GM12878 (cell line): ENCODE measurements at regions of chr3 and their contacts with region 1.

Region 1: DNA sequence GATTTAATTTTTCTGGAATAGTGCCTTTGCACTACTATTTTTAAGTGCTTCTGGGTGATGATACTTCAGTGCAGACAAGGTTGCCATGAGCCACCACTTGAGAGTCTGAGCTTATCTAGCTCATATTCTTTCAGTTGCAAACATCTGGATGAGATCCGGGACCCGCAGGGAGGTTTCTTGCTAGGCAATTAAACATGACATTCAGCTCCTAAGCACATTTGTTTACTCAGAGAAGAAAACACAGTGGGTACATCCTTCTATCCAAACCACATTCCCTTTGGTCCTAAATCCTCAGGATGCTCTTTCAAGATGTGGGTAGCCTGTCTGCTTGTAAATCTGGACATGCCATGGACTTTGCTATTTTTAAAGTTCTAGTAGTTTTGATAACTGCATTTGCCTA is 12.0 kb downstream of the PLSCR1 start:
- DNase-seq: no peak
- ATAC-seq: no peak
- H3K4me3 ChIP-seq: no peak overlapping the region
- H3K27ac ChIP-seq: no peak overlapping the region
- H3K4me1 ChIP-seq: no peaks in the 10 kb centered on the region
- H3K27me3 ChIP-seq: no peaks in the 10 kb centered on the region
- CTCF ChIP-seq: no peak
- EP300 ChIP-seq: no peak
- POLR2A ChIP-seq: no peak
- RAD21 ChIP-seq: no peak

Region 2: GRCh38 chr3:144643771-144644198 is 1888.6 kb before region 1 on chr3:
- CTCF ChIA-PET with region 1: no interaction called
- POLR2A ChIA-PET with region 1: no interaction called
- RAD21 ChIA-PET with region 1: no interaction called
- SMC1A ChIA-PET with region 1: no interaction called
- in situ Hi-C with region 1: no loop called
- intact Hi-C with region 1: no loop called
- DNase-seq: no peak
- ATAC-seq: no peak
- H3K4me3 ChIP-seq: no peak overlapping the region
- H3K27ac ChIP-seq: no peak overlapping the region
- H3K4me1 ChIP-seq: no peaks in the 10 kb centered on the region
- H3K27me3 ChIP-seq: no peaks in the 10 kb centered on the region
- CTCF ChIP-seq: no peak
- EP300 ChIP-seq: no peak
- POLR2A ChIP-seq: no peak
- RAD21 ChIP-seq: no peak

Region 3: DNA sequence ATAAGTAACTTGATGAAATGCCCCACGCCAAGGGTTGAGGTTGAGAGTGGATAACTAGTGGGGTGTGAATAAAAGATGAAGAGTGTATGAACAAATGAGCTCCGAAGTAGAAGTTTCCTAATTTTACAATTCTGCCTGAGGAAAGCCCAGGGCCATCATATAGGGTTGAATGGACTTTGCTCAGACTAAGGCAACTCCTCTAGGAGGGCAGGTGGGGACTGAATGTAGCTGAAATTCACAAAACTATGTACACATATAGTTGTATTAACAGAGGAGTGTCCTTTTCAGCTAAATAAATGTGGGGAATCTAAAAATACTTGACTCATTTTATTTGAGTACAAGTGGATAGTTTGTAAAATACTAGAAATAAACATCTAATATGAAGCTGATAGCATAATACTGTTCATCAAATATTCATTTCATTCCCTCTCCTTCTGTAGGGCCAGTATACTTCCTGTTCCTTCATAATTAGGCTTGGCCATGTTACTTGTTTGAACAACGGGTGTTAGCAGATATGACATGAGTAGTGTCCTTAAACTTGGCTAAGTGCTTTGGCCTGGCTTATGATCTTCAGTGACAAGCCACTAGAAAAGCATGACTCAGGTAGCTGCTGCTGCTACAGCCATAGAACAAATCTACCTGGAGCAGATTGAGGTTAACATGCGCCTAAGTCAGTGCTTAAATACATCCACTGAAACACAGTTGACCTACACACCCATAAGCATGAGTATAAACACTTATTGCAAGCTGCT is 14.5 kb before region 1 on chr3:
- CTCF ChIA-PET with region 1: interaction called, 3 read pairs
- POLR2A ChIA-PET with region 1: no interaction called
- RAD21 ChIA-PET with region 1: no interaction called
- SMC1A ChIA-PET with region 1: interaction called, 11 read pairs
- in situ Hi-C with region 1: no loop called
- intact Hi-C with region 1: no loop called
- DNase-seq: no peak
- ATAC-seq: no peak
- H3K4me3 ChIP-seq: no peak overlapping the region
- H3K27ac ChIP-seq: no peak overlapping the region
- H3K4me1 ChIP-seq: no peaks in the 10 kb centered on the region
- H3K27me3 ChIP-seq: no peaks in the 10 kb centered on the region
- CTCF ChIP-seq: no peak
- EP300 ChIP-seq: no peak
- POLR2A ChIP-seq: no peak
- RAD21 ChIP-seq: no peak

Region 4: GRCh38 chr3:146561879-146562278 is 29.5 kb after region 1 on chr3:
- CTCF ChIA-PET with region 1: no interaction called
- POLR2A ChIA-PET with region 1: no interaction called
- RAD21 ChIA-PET with region 1: no interaction called
- SMC1A ChIA-PET with region 1: no interaction called
- in situ Hi-C with region 1: no loop called
- intact Hi-C with region 1: no loop called
- DNase-seq: no peak
- ATAC-seq: no peak
- H3K4me3 ChIP-seq: no peak overlapping the region
- H3K27ac ChIP-seq: no peak overlapping the region
- H3K4me1 ChIP-seq: no peaks in the 10 kb centered on the region
- H3K27me3 ChIP-seq: no peaks in the 10 kb centered on the region
- CTCF ChIP-seq: no peak
- EP300 ChIP-seq: no peak
- POLR2A ChIP-seq: no peak
- RAD21 ChIP-seq: no peak